AG04449 (cell line): ENCODE measurements at regions of chr2 and their contacts with region 1.

Region 1: DNA sequence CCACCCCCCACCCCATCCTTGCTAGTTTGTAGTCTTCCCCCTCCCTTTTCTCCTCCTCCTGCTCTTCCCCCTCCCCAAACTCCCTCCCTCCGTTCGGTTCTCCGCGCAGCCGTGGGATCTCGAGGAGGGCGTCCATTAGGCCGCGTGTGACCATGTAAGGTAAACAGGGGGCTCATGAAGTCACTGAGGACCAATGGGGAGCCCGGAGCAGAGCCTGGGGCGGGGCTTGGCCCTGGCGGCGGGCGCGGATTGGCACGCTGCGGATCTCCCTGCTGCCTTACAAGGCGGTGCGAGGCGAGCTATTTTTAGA is 246 bp upstream of the KLF7 start:
- DNase-seq: peak; percentile 99
- H3K4me3 ChIP-seq: peak overlapping the region; percentile 68; the same call in 1 of the 2 replicates
- CTCF ChIP-seq: no peak

Region 2: GRCh38 chr2:207083361-207084110 is 82.5 kb before region 1 on chr2:
- CTCF ChIA-PET with region 1: no interaction called
- POLR2A ChIA-PET with region 1: no interaction called
- DNase-seq: no peak
- H3K4me3 ChIP-seq: no peak overlapping the region
- CTCF ChIP-seq: no peak

Region 3: DNA sequence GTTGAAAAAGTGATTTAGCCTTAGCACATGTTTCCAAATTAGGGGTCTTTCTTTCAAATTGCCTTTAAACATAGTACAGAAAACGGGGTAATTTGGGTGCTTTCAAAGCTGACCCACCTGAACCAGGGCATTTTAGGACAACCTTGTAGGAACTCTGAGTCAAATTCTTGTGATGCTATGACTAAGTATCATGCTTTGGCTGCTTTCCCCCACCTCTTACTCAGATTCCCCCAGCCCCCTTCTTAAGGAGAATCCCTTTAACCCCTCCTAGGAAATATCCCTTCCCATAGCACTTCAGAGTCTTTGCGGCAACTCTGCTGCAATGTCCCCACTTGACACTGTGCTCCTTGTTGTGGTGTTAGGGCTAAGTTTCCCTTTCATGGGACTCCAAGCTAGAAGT is 18.4 kb after region 1 on chr2:
- CTCF ChIA-PET with region 1: interaction called, 5 read pairs
- POLR2A ChIA-PET with region 1: interaction called, 13 read pairs
- DNase-seq: no peak
- H3K4me3 ChIP-seq: no peak overlapping the region
- CTCF ChIP-seq: no peak

Region 4: GRCh38 chr2:207238831-207239701 is 73.1 kb after region 1 on chr2:
- CTCF ChIA-PET with region 1: no interaction called
- POLR2A ChIA-PET with region 1: interaction called, 47 read pairs
- DNase-seq: peak; percentile 100
- H3K4me3 ChIP-seq: no peak overlapping the region
- CTCF ChIP-seq: no peak

Region 5: DNA sequence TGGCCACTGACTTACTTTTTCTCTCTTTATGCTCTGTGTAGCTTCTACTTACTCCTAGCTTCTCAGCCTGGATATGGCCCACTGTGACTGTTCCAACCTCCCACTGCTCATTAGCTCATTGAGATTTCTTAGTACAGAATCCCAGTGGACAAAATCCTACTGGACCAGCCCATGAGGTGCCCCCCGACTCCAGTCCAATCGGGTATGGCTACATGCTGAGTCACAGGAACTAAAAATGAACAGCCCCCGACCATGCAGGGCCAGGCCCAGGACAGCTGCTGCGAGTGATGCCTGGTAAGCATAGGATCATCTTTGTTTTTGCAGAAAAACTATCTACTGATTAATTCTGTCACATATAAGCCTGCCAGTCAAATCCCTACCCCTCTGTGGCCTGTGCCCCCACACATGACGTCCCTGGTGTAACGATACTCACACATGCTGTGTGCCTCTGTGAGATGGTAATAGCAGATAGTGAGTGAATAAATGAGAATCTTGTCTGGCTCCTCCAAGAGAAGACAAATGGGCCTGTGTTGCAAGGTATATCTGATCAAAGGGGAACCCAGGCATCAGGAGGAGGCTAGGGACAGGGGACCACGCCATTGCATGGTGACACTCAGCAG is 85.7 kb after region 1 on chr2:
- CTCF ChIA-PET with region 1: interaction called, 6 read pairs
- POLR2A ChIA-PET with region 1: interaction called, 207 read pairs
- DNase-seq: no peak
- H3K4me3 ChIP-seq: no peak overlapping the region
- CTCF ChIP-seq: no peak

Region 6: DNA sequence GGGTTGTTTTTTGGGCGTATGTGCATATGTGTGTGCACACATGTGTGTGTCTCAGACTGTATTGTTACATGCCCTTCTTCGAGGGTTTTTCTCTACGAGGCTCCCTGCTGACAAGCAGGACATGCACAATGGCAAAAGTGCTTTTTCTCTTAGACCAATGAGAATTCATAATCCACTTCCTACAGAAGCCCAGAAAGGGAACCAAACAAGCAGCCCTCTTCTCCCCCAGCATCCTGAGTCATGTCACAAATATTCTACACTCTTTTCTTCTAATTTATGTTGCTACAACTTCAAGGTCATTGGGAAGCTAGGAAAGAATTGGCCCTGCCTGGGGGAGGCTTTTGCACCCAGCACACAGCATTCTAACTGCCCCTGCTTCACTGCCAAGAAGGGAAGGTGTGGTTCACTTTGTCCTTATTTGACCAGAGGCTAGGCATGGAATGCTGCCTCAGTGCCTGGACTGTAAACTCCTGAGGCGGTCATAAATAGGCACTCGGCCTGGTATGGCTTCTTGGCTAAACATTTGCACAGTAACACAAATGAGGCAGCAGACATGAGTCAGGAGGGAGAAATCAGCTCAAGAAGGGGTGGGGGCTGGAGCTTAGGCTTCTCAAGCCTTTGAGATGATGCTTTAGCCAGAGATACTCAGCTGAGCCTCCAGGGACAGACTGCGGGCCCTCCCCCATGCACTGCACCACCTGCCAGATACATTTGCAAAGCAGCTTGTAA is 92.4 kb after region 1 on chr2:
- CTCF ChIA-PET with region 1: interaction called, 6 read pairs
- POLR2A ChIA-PET with region 1: interaction called, 207 read pairs
- DNase-seq: peak; percentile 100
- H3K4me3 ChIP-seq: no peak overlapping the region
- CTCF ChIP-seq: peak; percentile 29

Region 7: DNA sequence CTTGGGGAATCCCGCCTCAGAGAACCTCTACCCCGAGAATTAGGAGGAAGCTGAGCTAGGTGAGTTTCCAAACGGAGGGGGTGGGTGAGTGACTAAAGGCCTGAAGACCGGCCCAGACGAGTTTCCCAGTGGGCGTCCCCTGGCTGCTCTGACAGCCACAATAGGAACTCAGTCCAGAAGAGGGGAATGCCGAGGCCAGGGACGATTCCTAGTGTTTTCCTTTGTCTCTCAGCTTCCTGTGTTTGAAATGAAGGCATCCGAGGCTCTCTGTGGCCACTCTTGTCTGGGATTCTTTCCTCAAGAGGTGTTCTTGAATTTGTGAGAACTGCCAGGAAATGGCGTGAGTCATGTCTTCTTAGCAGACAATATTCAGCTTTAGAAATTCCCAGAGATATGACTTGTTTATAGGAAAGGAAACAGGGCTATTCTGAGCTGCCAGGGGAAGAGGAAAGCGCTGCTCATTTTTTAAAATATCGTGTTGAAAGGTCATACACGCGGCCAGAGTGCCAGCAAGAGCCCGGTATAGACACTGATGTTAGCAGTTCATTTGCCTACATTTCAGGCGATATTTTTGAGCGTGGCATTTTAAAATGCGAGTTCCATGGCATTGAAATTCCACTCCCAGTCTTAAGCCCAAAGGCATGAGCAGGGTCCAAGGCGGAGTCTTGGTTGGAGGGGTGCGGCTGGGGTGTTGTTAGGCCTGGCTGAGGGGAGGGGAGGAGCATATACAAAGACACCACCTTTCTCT is 168.8 kb after region 1 on chr2:
- CTCF ChIA-PET with region 1: interaction called, 4 read pairs
- POLR2A ChIA-PET with region 1: interaction called, 37 read pairs
- DNase-seq: peak; percentile 96
- H3K4me3 ChIP-seq: peak overlapping the region; percentile 45
- CTCF ChIP-seq: no peak